Activated naive CD4-positive, alpha-beta T cell treated with anti-CD3 and anti-CD28 coated beads for 36 hours (primary cell): ENCODE measurements at regions of chr3 and their contacts with region 1.

Region 1: DNA sequence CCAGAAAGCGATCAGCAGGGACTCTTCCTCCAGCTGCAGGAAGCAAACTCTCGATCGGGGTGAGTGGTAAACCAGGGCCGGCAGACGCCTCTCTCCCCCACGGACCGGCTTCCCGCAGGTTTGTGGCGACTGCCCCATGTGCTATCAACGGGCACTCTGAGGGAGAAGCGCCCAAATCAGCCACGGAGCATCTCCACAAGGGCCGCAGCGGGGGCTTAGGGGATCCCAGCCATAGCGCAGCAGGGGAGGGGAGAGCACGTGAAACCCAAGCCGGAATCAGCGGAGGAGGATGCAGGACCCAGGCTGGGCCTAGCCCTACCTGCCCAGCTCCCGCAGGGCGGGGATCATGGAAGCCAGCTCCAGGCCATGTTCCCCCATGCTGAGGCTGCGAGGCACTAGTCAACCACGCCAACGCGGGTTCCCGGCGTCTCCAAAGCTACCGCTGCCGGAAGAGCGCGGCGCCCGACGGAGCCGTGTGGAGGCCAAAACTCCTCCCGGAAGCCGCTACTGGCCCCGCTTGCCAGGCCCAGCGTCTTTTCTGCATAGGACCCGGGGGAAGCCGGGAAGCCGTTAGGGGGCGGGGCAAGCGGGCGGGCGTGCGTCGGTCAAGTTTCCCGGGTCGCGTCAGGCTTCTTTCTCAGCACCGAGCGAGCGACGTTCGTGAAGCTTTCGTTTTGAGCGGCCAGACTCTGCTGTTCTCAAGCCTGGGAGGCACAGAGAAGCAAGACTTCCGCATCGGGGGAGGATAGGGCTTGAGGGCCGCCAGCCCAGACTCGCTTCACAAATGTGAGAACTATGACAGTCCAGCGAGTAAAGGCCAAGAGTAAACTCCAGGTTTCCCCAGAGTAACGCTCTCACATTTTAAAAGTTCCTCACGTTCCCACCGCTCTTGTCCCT is at the start of gene ATR:
- DNase-seq: peak; percentile 98
- H3K4me3 Mint-ChIP-seq: peak within 1 kb of the TSS; percentile 94
- H3K27ac Mint-ChIP-seq: peak within 1 kb of the TSS; percentile 95
- H3K4me1 Mint-ChIP-seq: peaks cover 41% of the 10 kb centered on the region
- H3K27me3 Mint-ChIP-seq: no peaks in the 10 kb centered on the region
- total RNA-seq, gene ATR: 42.5 to 43.1 TPM

Region 2: DNA sequence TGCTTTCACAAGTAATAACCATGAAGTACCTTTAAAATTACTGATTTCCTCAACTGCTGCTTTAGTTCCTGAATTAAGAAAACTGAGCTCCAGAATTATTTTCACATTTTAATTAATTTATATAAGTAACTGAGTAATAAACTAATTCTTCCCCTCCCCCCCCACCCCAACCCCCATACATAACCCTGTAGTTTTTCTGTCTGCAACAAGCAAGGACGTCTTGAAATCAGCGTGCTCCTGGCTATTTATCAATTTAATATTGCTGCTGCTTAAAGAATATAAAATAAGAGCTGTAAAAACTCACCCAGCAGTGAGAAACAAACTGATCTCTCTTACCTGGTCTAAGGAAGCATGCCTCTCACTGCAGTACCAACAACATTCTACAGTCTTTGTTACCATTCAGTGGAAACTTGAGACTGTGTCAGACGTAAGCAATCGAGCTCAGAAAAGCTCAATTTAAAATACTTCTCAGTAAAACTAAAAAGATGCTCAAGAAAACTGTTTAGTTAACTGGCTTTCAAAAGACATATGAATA is 550.3 kb before region 1 on chr3:
- CTCF ChIA-PET with region 1: no interaction called
- intact Hi-C with region 1: loop called (anchors 5 kb)
- DNase-seq: peak; percentile 62
- H3K4me3 Mint-ChIP-seq: peak overlapping the region; percentile 80
- H3K27ac Mint-ChIP-seq: peak overlapping the region; percentile 73
- H3K4me1 Mint-ChIP-seq: peaks cover 24% of the 10 kb centered on the region
- H3K27me3 Mint-ChIP-seq: no peaks in the 10 kb centered on the region

Region 3: GRCh38 chr3:142226484-142226883 is 352.1 kb before region 1 on chr3:
- CTCF ChIA-PET with region 1: no interaction called
- intact Hi-C with region 1: loop called (anchors 5 kb)
- DNase-seq: no peak
- H3K4me3 Mint-ChIP-seq: no peak overlapping the region
- H3K27ac Mint-ChIP-seq: no peak overlapping the region
- H3K4me1 Mint-ChIP-seq: peaks cover 19% of the 10 kb centered on the region
- H3K27me3 Mint-ChIP-seq: no peaks in the 10 kb centered on the region

Region 4: DNA sequence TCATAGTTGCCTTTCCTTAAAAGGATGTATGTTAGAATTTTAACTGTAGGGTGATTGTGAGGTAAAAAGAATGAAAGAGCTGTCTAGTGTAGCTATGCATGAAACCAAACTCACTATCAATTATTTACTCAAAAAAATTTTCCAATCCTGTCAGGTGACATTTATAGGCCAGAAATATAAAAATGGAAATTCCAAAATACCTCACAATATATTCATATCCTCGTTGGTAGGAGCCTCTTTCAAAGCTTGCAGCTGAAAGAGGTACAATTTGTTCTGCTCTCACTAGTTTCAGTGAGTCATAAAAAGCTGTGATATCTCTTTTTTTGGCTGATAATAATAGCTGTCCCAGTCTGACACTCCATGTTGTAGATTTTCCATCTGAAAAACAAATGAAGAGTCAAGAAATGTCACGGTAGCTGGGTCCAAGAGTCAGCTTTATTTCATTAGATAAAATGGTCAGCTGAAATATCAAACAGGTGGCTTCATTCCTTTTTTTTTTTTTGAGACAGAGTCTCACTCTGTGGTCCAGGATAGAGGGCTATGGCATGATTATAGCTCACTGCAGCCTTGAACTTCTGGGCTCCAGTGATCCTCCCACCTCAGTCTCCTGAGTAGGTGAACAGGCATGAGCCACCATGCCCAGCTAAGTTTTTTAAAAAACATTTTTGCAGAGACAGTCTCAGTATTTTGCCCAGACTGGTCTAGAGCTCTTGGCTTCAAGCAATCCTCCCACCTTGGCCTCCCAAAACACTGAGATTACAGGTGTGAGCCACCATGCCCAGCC is 80.0 kb before region 1 on chr3:
- CTCF ChIA-PET with region 1: interaction called, 3 read pairs
- intact Hi-C with region 1: loop called (anchors 1 kb)
- DNase-seq: no peak
- H3K4me3 Mint-ChIP-seq: peak overlapping the region; percentile 15
- H3K27ac Mint-ChIP-seq: peak overlapping the region; percentile 80
- H3K4me1 Mint-ChIP-seq: peaks cover 35% of the 10 kb centered on the region
- H3K27me3 Mint-ChIP-seq: no peaks in the 10 kb centered on the region

Region 5: DNA sequence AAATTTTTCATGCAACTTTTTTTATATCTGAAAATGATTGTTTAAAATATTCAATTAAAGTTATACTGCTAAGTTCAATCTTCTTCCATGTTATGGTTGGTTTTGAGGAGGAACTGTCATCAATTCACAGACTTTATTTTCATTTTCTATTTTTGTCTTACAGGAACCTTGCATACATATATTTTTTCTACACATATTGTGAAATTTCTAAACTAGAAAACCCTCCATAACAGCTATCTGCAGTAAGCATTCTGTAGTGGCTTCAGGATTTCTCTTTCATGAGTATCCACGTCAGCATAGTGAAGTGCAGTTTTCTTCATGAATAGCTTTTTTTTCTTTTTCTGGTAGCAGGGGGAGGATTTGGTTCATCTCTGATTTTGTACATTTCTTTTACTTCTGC is 48.3 kb before region 1 on chr3:
- CTCF ChIA-PET with region 1: no interaction called
- intact Hi-C with region 1: no loop called
- DNase-seq: no peak
- H3K4me3 Mint-ChIP-seq: no peak overlapping the region
- H3K27ac Mint-ChIP-seq: no peak overlapping the region
- H3K4me1 Mint-ChIP-seq: peaks cover 10% of the 10 kb centered on the region
- H3K27me3 Mint-ChIP-seq: no peaks in the 10 kb centered on the region

Region 6: DNA sequence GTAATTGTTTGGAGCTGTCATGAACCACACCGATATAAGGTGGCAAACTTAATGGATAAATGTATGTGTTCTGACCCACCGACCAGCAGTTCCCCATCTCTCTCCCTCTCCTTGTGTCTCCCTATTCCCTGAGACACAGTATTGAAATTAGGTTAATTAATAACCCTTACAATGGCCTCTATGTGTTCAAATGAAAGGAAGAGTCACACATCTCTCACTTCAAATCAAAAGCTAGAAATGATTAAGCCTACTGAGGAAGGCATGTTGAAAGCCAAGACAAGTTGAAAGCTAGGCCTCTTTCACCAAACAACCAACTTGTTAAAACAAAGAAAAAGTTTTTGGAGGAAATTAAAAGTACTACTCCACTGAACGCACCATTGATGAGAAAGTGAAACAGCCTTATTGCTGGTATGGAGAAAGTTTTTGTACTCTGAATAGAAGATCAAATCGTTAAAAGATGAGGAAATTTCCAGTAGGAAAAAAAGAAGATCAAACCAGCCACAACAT is 15.0 kb before region 1 on chr3:
- CTCF ChIA-PET with region 1: interaction called, 4 read pairs
- intact Hi-C with region 1: loop called (anchors 1 kb)
- DNase-seq: no peak
- H3K4me3 Mint-ChIP-seq: no peak overlapping the region
- H3K27ac Mint-ChIP-seq: peak overlapping the region; percentile 88
- H3K4me1 Mint-ChIP-seq: peaks cover 22% of the 10 kb centered on the region
- H3K27me3 Mint-ChIP-seq: no peaks in the 10 kb centered on the region

Region 7: GRCh38 chr3:142595951-142596725 is 17.6 kb after region 1 on chr3 and contains the start of gene PLS1:
- CTCF ChIA-PET with region 1: interaction called, 4 read pairs
- intact Hi-C with region 1: loop called (anchors 1 kb)
- DNase-seq: peak; percentile 83
- H3K4me3 Mint-ChIP-seq: peak within 1 kb of the TSS; percentile 94
- H3K27ac Mint-ChIP-seq: peak within 1 kb of the TSS; percentile 66
- H3K4me1 Mint-ChIP-seq: peaks cover 14% of the 10 kb centered on the region
- H3K27me3 Mint-ChIP-seq: no peaks in the 10 kb centered on the region
- total RNA-seq, gene PLS1: 5.3 to 5.4 TPM

Region 8: GRCh38 chr3:142676151-142676550 is 97.6 kb after region 1 on chr3:
- CTCF ChIA-PET with region 1: no interaction called
- intact Hi-C with region 1: no loop called
- DNase-seq: no peak
- H3K4me3 Mint-ChIP-seq: no peak overlapping the region
- H3K27ac Mint-ChIP-seq: no peak overlapping the region
- H3K4me1 Mint-ChIP-seq: no peaks in the 10 kb centered on the region
- H3K27me3 Mint-ChIP-seq: no peaks in the 10 kb centered on the region

Region 9: GRCh38 chr3:142723968-142724681 is 145.6 kb after region 1 on chr3 and contains the start of gene TRPC1:
- CTCF ChIA-PET with region 1: no interaction called
- intact Hi-C with region 1: loop called (anchors 1 kb)
- DNase-seq: peak; percentile 57
- H3K4me3 Mint-ChIP-seq: peak within 1 kb of the TSS; percentile 83
- H3K27ac Mint-ChIP-seq: peak within 1 kb of the TSS; percentile 82
- H3K4me1 Mint-ChIP-seq: peaks cover 10% of the 10 kb centered on the region
- H3K27me3 Mint-ChIP-seq: peaks cover 20% of the 10 kb centered on the region
- total RNA-seq, gene TRPC1: 3.1 to 4.8 TPM